ENCODE measurements at regions of chr4 and their contacts with region 1.

Region 1: GRCh38 chr4:3480528-3481112 is 17.5 kb downstream of the DOK7 start:
- DNase-seq: peak; percentile 5
- H3K4me3 ChIP-seq: no peak overlapping the region
- CTCF ChIP-seq: peak; percentile 99

Region 2: DNA sequence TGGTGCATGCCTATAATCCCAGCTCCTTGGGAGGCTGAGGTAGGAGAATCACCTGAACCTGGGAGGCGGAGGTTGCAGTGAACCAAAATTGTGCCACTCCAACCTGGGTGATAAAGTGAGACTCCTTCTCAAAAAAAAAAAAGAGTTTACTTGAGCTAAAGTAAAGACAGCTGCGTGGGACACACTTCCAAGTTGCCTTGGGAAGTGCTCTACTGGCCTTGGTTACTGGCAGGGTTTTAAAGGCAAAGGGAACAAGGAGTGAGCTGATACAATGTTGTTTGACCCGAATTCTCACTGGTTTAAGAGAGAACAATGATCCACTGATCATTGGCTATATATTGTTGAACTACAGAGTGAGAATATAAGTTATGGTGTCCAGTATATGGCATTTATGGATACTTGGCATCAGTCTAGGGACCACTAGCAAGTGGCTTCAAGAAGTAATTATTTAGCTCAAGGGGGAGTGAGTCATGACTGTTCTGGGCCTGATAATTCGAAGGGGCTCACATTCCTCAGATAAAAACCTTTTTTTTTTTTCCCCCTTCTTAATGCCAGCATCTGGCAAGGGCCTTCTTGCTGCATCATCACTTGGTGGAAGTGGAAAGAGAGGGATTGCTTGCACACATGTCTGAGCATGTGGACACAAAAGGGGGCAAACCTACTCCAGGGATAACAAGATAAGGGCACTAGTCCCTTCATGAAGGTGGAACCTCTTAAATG is 484.9 kb before region 1 on chr4:
- CTCF ChIA-PET with region 1: no interaction called
- POLR2A ChIA-PET with region 1: no interaction called
- DNase-seq: no peak
- H3K4me3 ChIP-seq: no peak overlapping the region
- CTCF ChIP-seq: no peak

Region 3: DNA sequence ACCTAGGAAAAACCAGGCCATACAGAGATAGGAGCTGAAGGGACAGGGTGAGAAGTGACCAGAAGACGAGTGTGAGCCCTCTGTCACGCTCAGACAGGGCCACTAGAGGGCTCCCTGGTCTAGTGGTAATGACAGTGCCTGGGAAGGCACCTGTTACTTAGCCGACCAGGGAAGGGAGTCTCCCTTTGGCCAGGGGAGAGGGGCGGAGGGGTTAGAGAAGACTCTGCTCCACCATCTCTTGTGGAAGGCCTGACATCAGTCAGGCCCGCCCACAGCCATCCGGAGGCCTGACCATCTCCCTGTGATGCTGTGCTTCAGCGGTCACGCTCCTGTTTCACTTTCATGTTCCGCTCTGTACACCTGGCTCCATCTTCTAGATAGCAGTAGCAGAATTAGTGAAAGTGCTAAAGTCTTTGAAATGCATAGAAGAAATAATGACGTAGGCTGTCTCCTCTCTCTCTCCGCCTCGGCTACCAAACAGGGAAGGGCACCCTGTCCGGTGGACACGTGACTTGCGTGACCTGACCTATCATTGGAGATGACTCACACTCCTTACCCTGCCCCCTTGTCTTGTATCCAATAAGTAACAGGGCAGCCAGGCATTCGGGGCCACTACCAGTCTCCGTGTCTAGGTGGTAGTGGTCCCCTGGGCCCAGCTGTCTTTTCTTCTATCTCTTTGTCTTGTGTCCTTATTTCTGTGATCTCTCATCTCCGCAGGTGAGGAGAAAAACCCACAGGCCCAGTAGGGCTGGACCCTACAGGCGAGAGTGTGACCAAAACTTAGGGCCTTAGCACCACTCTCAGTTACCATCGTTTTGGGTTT is 432.9 kb before region 1 on chr4:
- CTCF ChIA-PET with region 1: no interaction called
- POLR2A ChIA-PET with region 1: no interaction called
- DNase-seq: no peak
- H3K4me3 ChIP-seq: no peak overlapping the region
- CTCF ChIP-seq: peak; percentile 87

Region 4: DNA sequence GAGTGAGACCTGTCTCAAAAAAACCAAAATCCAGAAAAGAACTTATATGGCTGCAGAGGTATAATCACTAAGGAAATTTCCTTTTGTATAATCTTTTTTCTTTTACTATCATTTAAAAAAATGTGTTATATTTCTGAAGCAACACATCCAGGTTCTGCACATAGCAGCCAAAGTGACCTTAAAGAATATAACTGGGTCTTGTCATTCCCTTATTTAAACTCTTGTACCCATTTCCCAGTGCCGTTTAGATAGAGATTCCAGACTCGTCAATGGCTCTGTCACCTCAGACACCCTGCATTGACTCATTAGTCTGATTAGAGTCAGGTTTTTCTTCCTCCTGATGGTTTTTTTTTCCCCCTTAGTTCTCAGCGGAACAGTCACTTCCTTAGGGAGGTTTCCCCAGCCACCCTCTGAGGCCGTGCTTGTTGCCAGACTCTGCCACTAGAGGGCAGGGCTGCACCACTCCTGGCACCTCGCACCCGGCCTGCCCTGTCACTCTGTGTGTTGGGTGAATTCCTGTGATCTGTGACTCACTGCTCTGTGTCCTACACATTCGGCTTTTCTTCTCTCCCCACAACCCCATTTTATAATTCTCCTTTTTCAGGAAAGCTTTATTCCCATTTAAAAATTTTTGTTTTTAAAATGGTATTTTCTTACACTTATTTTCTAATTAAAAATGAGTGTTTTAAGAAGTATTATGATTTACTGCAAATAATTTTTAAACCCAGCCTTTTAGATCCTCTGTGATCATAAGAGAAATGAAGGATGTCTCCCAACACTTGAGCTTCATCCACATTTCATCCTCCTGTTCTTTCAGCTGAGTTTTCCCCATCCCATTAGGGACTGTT is 374.1 kb before region 1 on chr4:
- CTCF ChIA-PET with region 1: interaction called, 25 read pairs
- POLR2A ChIA-PET with region 1: no interaction called
- DNase-seq: no peak
- H3K4me3 ChIP-seq: no peak overlapping the region
- CTCF ChIP-seq: peak; percentile 99

Region 5: DNA sequence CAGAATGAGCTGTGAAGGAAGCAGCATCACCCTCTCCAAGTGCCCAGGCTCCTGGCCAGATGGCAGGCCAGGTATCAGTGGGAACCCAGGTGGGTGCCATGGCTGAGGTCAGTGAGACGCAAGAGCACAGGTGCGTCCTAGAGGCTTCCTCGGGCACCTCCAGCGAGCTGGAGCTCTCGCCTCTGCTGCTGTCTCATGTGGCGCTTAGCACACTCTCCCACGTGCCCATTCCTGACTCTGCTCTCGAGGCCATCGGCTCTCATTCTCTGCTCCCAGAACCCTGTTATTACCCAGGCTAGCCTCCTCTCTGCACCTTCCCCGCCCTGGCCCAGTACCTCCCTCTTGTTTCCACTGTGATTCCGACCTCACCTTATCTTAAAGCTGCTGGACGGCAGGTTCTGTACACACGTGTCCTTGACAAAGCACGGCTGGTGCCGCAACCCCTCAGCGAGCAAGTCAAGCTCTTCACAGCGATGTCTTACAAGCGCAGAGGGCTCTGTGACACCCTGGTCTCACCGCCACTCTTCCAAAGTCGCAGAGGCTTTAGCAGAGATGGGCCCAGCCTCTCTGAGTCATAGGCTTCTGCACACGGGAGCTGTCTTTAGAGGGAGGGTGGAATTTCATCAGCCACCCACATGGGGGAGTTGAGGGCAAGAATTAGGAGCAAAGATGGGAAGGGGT is 247.1 kb before region 1 on chr4:
- CTCF ChIA-PET with region 1: interaction called, 10 read pairs
- POLR2A ChIA-PET with region 1: no interaction called
- DNase-seq: no peak
- H3K4me3 ChIP-seq: no peak overlapping the region
- CTCF ChIP-seq: peak; percentile 1

Region 6: DNA sequence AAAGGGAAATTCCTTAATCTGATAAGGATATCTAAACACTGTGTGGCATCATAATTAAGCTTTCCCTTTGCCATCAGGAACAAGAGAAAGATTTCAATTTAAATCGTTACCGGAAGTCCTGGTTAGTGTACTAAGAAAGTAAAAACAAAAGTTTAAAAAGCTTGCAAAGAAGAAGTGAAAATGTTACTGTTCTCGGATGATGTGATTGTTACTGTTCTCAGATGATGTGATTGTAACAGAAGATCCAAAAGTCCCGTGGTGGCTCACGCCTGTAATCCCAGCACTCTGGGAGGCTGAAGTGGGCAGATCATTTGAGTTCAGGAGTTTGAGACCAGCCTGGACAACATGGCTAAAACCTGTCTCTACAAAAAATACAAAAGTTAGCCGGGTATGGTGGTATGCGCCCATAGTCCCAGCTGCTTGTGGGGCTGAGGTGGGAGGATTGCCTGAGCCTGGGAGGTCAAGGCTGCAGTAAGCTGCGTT is 125.3 kb before region 1 on chr4:
- CTCF ChIA-PET with region 1: interaction called, 14 read pairs
- POLR2A ChIA-PET with region 1: no interaction called
- DNase-seq: no peak
- H3K4me3 ChIP-seq: no peak overlapping the region
- CTCF ChIP-seq: no peak

Region 7: DNA sequence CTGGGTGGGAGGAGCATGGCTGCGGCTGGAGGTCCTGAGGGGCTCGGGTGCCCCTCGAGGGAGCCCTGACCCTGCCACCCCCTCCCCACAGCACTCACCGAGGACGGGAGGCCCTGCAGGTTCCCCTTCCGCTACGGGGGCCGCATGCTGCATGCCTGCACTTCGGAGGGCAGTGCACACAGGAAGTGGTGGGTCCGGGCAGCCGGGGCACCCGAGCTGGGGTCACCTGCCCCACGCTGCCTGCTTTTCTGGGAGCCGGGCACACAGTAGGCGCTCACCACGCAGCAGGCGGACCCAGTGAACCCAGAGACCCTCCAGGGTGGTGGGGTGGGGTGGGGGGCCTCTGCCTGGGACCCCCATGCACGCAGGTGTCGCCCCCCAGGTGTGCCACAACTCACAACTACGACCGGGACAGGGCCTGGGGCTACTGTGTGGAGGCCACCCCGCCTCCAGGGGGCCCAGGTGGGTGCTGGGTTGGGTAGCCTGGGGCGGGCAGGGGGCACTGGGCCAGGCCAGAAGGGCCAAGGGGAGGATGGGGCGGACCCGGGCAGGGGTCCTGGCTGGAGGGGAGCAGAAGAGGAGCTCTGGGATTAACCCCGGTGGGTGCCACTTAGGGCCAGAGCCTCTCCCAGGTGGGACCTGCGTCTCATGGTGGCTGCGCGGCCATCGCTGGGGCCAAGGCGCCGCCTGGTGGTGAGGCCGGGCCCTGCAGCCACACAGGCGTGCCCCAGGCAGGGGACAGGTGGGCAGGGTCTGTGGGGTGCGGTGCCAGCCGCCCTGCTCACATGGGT is 37.5 kb before region 1 on chr4:
- CTCF ChIA-PET with region 1: interaction called, 10 read pairs
- POLR2A ChIA-PET with region 1: no interaction called
- DNase-seq: no peak
- H3K4me3 ChIP-seq: no peak overlapping the region
- CTCF ChIP-seq: peak; percentile 100

Region 8: GRCh38 chr4:3470244-3471097 is 10.1 kb before region 1 on chr4:
- CTCF ChIA-PET with region 1: interaction called, 33 read pairs
- POLR2A ChIA-PET with region 1: no interaction called
- DNase-seq: no peak
- H3K4me3 ChIP-seq: no peak overlapping the region
- CTCF ChIP-seq: no peak